ENCODE measurements at regions of chr7 and their contacts with region 1.

Region 1: DNA sequence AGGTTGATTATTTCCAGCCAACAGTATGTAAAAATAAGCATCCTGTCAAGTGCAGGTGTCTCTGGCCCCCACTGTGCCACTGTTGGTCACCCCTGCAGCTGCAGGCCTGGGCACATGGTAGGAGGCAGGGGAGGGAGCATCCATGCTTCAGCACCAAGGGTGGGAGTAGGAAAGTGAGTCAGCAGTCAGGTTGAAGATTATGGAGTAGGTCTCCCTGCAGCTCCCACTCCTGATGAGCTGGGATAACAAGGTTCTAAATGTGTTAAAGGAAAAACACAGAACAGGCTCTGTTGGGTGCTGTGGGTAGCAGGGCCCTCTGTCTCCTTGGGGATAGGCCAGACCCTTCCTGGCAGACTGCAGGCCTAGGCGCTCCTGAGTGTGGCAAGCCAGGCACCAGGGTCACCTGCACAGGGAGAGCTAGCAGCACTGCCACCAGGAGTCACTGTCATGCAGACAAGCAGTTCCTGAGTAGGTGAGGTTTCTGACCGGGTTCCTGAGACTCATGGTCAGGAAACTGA is 59.3 kb downstream of the NUDCD3 start:
- DNase-seq: peak in 9 of 14 experiments; percentile 4 to 47 (median 16)
- ATAC-seq: peak; percentile 57
- H3K4me3 ChIP-seq: no peak overlapping the region
- H3K4me3 Mint-ChIP-seq: no peak overlapping the region
- H3K27ac ChIP-seq: no peak overlapping the region
- H3K27ac Mint-ChIP-seq: peak overlapping the region; percentile 25
- H3K4me1 ChIP-seq: peaks cover 15% of the 10 kb centered on the region
- H3K4me1 Mint-ChIP-seq: peaks cover 61% of the 10 kb centered on the region
- H3K27me3 ChIP-seq: no peaks in the 10 kb centered on the region
- H3K27me3 Mint-ChIP-seq: no peaks in the 10 kb centered on the region
- CTCF ChIP-seq: no peak

Region 2: GRCh38 chr7:43850348-43851116 is 580.6 kb before region 1 on chr7:
- CTCF ChIA-PET with region 1: no interaction called
- POLR2A ChIA-PET with region 1: no interaction called
- intact Hi-C with region 1: no loop called
- DNase-seq: no peak
- ATAC-seq: no peak
- H3K4me3 ChIP-seq: no peak overlapping the region
- H3K4me3 Mint-ChIP-seq: no peak overlapping the region
- H3K27ac ChIP-seq: no peak overlapping the region
- H3K27ac Mint-ChIP-seq: no peak overlapping the region
- H3K4me1 ChIP-seq: no peaks in the 10 kb centered on the region
- H3K4me1 Mint-ChIP-seq: no peaks in the 10 kb centered on the region
- H3K27me3 ChIP-seq: no peaks in the 10 kb centered on the region
- H3K27me3 Mint-ChIP-seq: no peaks in the 10 kb centered on the region
- CTCF ChIP-seq: no peak

Region 3: GRCh38 chr7:44415047-44415446 is 16.1 kb before region 1 on chr7:
- CTCF ChIA-PET with region 1: interaction called, 3 read pairs
- POLR2A ChIA-PET with region 1: no interaction called
- intact Hi-C with region 1: loop called in 1 of 2 experiments (anchors 2 kb)
- DNase-seq: no peak
- ATAC-seq: no peak
- H3K4me3 ChIP-seq: no peak overlapping the region
- H3K4me3 Mint-ChIP-seq: no peak overlapping the region
- H3K27ac ChIP-seq: no peak overlapping the region
- H3K27ac Mint-ChIP-seq: peak overlapping the region; percentile 39
- H3K4me1 ChIP-seq: no peaks in the 10 kb centered on the region
- H3K4me1 Mint-ChIP-seq: peaks cover 48% of the 10 kb centered on the region
- H3K27me3 ChIP-seq: no peaks in the 10 kb centered on the region
- H3K27me3 Mint-ChIP-seq: no peaks in the 10 kb centered on the region
- CTCF ChIP-seq: no peak

Region 4: DNA sequence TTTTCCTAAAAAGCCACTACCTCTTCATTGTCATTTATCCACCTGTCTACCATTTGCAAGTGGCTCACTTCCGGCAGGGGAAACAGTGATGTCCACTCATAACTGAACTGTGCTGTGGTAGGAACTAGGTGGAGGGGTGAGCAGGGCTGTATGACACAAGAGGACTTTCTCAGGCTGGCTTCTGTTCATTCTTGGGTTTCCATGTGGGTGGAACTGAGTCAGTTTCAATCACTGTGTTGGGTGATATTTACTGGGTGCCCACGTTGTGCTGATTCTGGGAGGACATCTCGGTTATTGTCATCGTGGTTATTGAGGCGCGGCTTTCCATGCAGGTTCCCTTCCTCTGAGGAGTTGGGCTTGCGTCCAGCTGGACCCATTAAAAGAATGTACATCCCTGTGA is 765.2 kb after region 1 on chr7:
- CTCF ChIA-PET with region 1: no interaction called
- POLR2A ChIA-PET with region 1: no interaction called
- intact Hi-C with region 1: no loop called
- DNase-seq: no peak
- ATAC-seq: no peak
- H3K4me3 ChIP-seq: no peak overlapping the region
- H3K4me3 Mint-ChIP-seq: no peak overlapping the region
- H3K27ac ChIP-seq: no peak overlapping the region
- H3K27ac Mint-ChIP-seq: no peak overlapping the region
- H3K4me1 ChIP-seq: no peaks in the 10 kb centered on the region
- H3K4me1 Mint-ChIP-seq: no peaks in the 10 kb centered on the region
- H3K27me3 ChIP-seq: peaks cover 0 to 2% of the 10 kb centered on the region in 2 experiments
- H3K27me3 Mint-ChIP-seq: peaks cover 12% of the 10 kb centered on the region
- CTCF ChIP-seq: no peak